Left ventricle myocardium inferior (tissue), 1 donor: ENCODE measurements at regions of chr6 and their contacts with region 1.

Region 1: DNA sequence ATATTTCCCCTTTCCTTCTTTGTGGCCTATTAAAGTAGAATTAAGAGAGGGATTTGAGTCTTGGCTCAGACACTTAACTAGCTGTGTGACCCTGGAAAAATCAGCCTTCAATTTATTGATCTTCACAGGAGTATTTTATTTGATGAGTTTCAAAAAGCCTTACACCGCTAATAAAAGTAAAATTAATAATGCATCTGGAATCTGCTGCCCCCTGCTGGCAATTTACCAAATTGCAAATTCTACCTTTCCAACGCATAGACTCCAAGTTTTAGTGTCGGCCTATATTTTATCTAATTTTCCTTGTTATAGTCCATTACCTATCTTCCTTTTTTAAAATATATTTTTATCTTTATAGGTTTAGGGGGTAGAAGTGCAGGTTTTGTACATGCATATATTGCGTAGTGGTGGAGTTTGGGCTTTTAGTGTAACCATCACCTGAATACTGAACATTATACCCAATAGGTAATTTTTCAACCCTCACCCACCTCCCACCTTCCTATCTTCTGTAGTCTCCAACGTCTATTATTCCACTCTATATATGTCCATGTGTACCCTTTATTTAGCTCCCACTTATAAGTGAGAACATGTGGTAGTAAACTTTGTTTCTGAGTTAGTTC is 46.3 kb downstream of the GOPC start:
- DNase-seq: no peak
- H3K4me3 ChIP-seq: no peak overlapping the region
- H3K27ac ChIP-seq: no peak overlapping the region
- H3K4me1 ChIP-seq: peaks cover 12% of the 10 kb centered on the region
- H3K27me3 ChIP-seq: no peaks in the 10 kb centered on the region
- CTCF ChIP-seq: peak; percentile 94

Region 2: GRCh38 chr6:117352466-117353081 is 203.4 kb before region 1 on chr6:
- intact Hi-C with region 1: loop called (anchors 5 kb)
- DNase-seq: no peak
- H3K4me3 ChIP-seq: no peak overlapping the region
- H3K27ac ChIP-seq: no peak overlapping the region
- H3K4me1 ChIP-seq: no peaks in the 10 kb centered on the region
- H3K27me3 ChIP-seq: no peaks in the 10 kb centered on the region
- CTCF ChIP-seq: peak; percentile 58

Region 3: DNA sequence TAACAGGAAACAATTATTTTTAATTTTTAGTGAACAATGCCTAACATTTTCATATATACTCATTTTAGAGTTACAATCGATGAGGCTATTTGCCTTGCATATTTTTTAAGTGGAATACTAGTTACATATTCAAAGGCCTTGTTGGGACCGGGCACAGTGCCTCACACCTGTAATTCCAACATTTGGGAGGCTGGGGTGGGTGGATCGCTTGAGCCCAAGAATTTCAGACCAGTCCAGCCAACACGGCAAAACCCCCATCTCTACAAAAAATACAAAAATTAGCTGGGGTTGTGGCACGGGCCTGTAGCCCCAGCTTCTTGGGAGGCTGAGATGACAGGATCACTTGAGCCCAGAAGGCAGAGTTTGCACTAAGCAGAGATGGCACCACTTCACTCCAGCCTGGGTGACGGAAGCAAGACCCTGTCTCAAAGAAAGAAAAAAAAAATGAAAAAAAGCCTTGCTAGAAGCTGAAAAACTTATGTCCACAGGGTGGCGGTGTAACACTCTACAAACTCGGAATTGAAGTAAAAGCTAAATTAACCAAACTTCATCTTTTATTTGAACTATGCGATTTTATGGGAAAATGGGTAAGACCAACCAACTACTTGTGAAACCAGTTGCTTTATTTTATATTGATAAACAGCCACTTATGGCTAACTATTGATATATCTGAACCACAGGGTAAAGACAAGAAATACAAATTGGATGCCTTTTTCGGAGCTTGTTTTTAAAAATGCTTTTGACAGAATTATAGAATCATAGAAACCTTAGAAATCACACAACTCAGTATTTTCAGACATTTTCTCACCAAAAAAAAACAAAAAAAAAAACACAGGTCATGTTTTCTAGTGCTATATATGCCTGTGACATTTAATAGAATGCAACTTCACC is 106.2 kb before region 1 on chr6:
- intact Hi-C with region 1: loop called (anchors 2 kb)
- DNase-seq: no peak
- H3K4me3 ChIP-seq: no peak overlapping the region
- H3K27ac ChIP-seq: no peak overlapping the region
- H3K4me1 ChIP-seq: peaks cover 6% of the 10 kb centered on the region
- H3K27me3 ChIP-seq: peaks cover 23% of the 10 kb centered on the region
- CTCF ChIP-seq: peak; percentile 83